Gastrocnemius medialis (tissue), 4 donors: ENCODE measurements at regions of chr1 and their contacts with region 1.

Region 1: GRCh38 chr1:26889551-26890466 is at the start of gene GPN2:
- DNase-seq: peak; percentile 47 to 70
- ATAC-seq: peak; percentile 98
- H3K4me3 ChIP-seq: peak within 1 kb of the TSS; percentile 89 to 99 (median 96)
- H3K27ac ChIP-seq: peak within 1 kb of the TSS; percentile 87 to 95 (median 93)
- H3K4me1 ChIP-seq: peaks cover 10 to 19% of the 10 kb centered on the region in 2 donors
- H3K27me3 ChIP-seq: no peaks in the 10 kb centered on the region
- CTCF ChIP-seq: no peak
- POLR2A ChIP-seq: peak; percentile 45 to 68
- total RNA-seq, gene GPN2: 8.9 to 10.0 (median 9.8) TPM

Region 2: GRCh38 chr1:26874896-26875295 is 14.9 kb before region 1 on chr1:
- in situ Hi-C with region 1: no loop called
- intact Hi-C with region 1: no loop called
- DNase-seq: no peak
- ATAC-seq: no peak
- H3K4me3 ChIP-seq: no peak overlapping the region
- H3K27ac ChIP-seq: no peak overlapping the region
- H3K4me1 ChIP-seq: peaks cover 0 to 4% of the 10 kb centered on the region in 2 donors
- H3K27me3 ChIP-seq: no peaks in the 10 kb centered on the region
- CTCF ChIP-seq: no peak
- POLR2A ChIP-seq: no peak

Region 3: DNA sequence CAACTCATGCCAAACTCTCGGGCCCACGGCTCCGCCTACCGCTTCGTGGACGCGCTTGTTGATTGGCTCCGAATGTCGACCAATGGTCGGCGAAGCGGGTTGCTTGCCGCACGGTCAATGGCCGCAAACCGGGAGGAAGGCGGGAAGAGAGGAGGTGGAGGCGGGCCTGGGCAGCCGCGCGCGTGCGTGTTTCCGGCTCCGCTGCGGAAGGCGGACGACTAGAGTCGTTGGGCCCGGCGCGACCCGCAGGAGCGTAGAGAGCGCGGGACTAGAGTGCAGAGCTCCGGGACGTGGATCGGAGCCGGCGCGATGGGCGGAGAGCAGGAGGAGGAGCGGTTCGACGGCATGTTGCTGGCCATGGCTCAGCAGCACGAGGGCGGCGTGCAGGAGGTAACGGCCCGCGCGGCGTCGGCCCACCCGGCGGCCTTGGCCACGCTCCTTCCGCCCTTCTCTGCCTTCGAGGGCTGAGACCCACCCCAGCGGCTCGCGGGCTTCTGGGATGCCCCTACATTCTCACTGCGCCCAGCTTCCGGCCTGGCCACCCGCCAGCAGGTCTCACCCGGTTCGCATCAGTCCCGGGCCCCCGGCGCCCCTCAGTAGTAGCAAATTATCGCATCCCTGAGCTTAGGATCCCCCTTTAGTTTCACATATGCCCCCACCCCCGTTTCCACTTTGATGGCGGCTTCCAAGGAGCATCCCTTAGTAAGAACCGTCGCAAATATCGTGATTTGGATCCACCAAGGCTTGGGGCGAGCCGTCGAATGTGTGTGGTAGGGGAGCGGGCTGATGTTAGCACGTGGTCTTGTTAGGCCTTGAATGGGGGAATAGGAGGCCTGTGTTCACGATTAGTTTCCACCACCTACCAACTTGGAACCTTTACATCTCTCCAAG is 32.0 kb after region 1 on chr1 and contains the start of gene NUDC:
- in situ Hi-C with region 1: no loop called
- intact Hi-C with region 1: loop called (anchors 2 kb)
- DNase-seq: peak; percentile 97
- ATAC-seq: peak; percentile 99
- H3K4me3 ChIP-seq: peak within 1 kb of the TSS; percentile 85 to 97 (median 88)
- H3K27ac ChIP-seq: peak within 1 kb of the TSS; percentile 86 to 94 (median 90)
- H3K4me1 ChIP-seq: peaks cover 16 to 20% of the 10 kb centered on the region in 2 donors
- H3K27me3 ChIP-seq: no peaks in the 10 kb centered on the region
- CTCF ChIP-seq: no peak
- POLR2A ChIP-seq: peak; percentile 90 to 94
- total RNA-seq, gene NUDC: 39.9 to 83.5 (median 70.6) TPM

Region 4: DNA sequence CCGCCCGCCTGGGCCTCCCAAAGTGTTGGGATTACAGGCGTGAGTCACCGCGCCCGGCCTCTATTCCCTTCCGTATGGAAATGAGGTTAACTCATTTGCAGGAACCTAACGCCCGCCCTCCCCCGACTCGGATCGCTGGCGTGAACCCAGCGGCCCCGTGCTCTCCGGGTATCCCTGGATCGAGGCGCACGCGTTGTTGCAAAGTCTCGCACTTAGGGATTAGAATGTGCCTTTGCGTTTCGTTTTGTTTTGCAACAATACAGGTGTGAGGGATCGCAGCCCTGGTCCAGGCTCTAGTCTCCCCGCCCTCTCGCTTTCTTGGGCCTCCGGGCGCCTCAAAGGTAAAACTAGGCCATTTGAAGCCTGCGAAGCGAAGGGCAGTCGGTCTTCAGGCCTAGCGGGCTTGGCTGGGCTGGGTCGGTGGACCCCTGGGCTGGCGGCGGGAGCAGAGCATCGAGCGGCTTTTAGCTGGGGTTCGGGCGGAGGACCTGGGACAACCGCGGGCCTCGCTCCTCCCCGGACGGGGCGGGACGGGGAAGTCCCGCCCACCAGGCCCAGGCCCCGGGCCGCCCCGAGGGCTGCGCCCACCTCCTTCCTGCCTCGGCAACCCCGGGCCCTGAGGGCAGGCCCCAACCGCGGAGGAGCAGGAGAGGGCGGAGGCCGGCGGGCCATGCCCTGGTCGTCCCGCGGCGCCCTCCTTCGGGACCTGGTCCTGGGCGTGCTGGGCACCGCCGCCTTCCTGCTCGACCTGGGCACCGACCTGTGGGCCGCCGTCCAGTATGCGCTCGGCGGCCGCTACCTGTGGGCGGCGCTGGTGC is 1069.8 kb after region 1 on chr1 and contains the start of gene XKR8:
- in situ Hi-C with region 1: no loop called
- intact Hi-C with region 1: no loop called
- DNase-seq: peak; percentile 41 to 52
- ATAC-seq: peak; percentile 73 to 86
- H3K4me3 ChIP-seq: peak within 1 kb of the TSS; percentile 61 to 86 (median 78)
- H3K27ac ChIP-seq: peak within 1 kb of the TSS; percentile 78 to 87 (median 82)
- H3K4me1 ChIP-seq: peaks cover 9 to 11% of the 10 kb centered on the region in 2 donors
- H3K27me3 ChIP-seq: no peaks in the 10 kb centered on the region
- CTCF ChIP-seq: peak in 4 of 5 experiments; percentile 21 to 47 (median 25)
- POLR2A ChIP-seq: peak; percentile 45 to 52
- total RNA-seq, gene XKR8: 3.8 to 7.4 (median 5.4) TPM